GM12878 (cell line): ENCODE measurements at regions of chr1 and their contacts with region 1.

Region 1: GRCh38 chr1:168225476-168226190 is at the start of gene SFT2D2:
- DNase-seq: no peak
- ATAC-seq: peak; percentile 92
- H3K4me3 ChIP-seq: peak within 1 kb of the TSS; percentile 79
- H3K27ac ChIP-seq: peak within 1 kb of the TSS; percentile 85
- H3K4me1 ChIP-seq: peaks cover 28% of the 10 kb centered on the region
- H3K27me3 ChIP-seq: no peaks in the 10 kb centered on the region
- CTCF ChIP-seq: no peak
- EP300 ChIP-seq: no peak
- POLR2A ChIP-seq: peak; percentile 94
- RAD21 ChIP-seq: no peak
- polyA plus RNA-seq, gene SFT2D2: 5.6 to 6.3 TPM

Region 2: DNA sequence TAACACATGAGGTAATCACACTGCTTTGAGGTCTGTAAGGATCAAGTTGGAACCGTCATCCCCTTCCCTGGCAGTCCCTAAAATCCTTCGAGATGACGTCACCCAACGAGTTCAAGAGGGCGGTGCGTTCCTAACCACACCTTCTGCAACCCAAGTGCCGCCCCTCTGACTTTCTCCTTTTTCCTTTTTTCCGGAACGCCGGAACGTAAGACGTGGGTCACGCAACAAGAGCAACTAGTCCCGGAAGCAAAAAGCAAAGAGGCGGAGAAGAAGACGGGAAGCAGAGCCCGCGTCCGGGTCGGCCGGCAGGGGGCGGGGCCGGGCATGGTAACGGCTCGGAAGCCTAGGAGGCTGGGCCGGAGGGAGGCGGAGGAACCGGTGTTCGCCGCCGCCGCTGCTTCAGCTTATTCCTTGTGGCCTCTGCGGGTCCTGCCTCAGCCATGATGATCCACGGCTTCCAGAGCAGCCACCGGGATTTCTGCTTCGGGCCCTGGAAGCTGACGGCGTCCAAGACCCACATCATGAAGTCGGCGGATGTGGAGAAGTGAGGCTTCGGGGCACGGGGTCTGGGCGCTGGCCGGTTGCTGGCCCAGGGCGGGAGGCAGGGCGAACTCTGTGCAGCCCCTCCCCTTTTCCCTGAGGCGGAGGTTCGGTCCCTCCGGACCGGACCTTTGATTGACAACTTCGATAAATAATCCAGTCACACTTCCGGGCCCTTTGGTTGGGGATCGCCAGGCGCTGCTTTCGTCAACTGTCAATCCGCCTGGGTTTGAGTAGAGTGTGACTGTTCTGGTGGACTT is 46.8 kb before region 1 on chr1 and contains the start of gene TIPRL:
- CTCF ChIA-PET with region 1: interaction called, 10 read pairs
- POLR2A ChIA-PET with region 1: interaction called, 21 read pairs
- RAD21 ChIA-PET with region 1: interaction called, 13 read pairs
- SMC1A ChIA-PET with region 1: interaction called, 5 read pairs
- in situ Hi-C with region 1: no loop called
- intact Hi-C with region 1: loop called (anchors 2 kb)
- DNase-seq: peak; percentile 89
- ATAC-seq: peak; percentile 93
- H3K4me3 ChIP-seq: peak within 1 kb of the TSS; percentile 91
- H3K27ac ChIP-seq: peak within 1 kb of the TSS; percentile 95
- H3K4me1 ChIP-seq: no peaks in the 10 kb centered on the region; the same call in 1 of the 2 replicates
- H3K27me3 ChIP-seq: no peaks in the 10 kb centered on the region
- CTCF ChIP-seq: peak; percentile 36 to 54 (median 51); a peak in 5 of 6 replicates
- EP300 ChIP-seq: no peak
- POLR2A ChIP-seq: peak; percentile 90
- RAD21 ChIP-seq: peak; percentile 25; the same call in 1 of the 2 replicates
- polyA plus RNA-seq, gene TIPRL: 51.9 to 57.9 TPM

Region 3: GRCh38 chr1:168903237-168903830 is 677.7 kb after region 1 on chr1:
- CTCF ChIA-PET with region 1: no interaction called
- POLR2A ChIA-PET with region 1: no interaction called
- RAD21 ChIA-PET with region 1: no interaction called
- SMC1A ChIA-PET with region 1: no interaction called
- in situ Hi-C with region 1: no loop called
- intact Hi-C with region 1: no loop called
- DNase-seq: no peak
- ATAC-seq: no peak
- H3K4me3 ChIP-seq: no peak overlapping the region
- H3K27ac ChIP-seq: no peak overlapping the region
- H3K4me1 ChIP-seq: no peaks in the 10 kb centered on the region
- H3K27me3 ChIP-seq: no peaks in the 10 kb centered on the region
- CTCF ChIP-seq: no peak
- EP300 ChIP-seq: no peak
- POLR2A ChIP-seq: no peak
- RAD21 ChIP-seq: no peak